Breast epithelium (tissue), 4 donors: ENCODE measurements at regions of chr2 and their contacts with region 1.

Region 1: DNA sequence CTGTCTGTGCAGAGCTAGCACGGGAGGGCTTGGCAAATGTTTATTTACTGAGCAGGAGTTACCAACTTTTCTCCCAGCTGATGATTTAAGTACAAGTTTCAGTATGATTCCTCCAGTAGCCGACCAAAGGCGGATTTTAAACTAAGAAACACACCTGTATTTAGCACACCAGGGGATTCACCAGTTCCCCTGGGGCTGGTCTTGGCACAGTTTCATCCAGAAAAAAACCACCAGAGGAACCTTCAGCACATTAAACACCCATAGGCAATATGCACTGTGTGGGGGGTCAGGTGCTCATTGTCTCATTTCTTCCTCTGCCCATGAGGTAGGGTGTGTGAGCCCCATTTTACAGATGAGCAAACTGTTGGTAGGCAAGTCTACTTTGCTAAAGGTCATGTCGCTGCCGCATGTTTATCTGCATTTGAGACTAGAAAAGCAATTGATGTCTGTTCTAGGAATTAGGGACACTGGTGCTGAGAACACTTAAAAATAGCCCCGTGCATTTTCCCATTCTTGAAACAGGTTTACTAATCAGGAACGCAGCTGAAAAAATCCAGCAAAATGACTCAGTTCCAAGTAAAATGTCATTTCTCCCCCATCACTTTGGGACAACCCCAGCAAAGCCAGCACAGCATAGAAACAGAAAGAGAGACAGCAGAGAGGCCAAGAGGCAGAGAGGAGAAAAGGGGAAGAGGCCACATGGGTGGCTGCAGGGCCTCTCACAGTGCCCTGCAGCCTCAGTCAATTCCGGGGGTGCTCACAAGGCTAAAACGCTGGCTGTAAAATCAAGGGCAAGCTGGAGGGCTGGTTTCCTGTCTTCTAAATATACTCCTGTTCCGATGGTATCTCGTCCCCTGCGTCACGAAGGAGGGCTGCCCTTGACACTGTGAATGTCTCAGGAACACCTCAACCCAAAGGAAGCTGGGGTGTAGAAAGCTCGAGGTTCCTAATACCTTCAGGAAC is 166.8 kb upstream of the ID2 start:
- DNase-seq: peak in 1 of 2 donors; percentile 44
- H3K4me3 ChIP-seq: no peak overlapping the region
- H3K27ac ChIP-seq: no peak overlapping the region
- H3K4me1 ChIP-seq: no peaks in the 10 kb centered on the region
- H3K27me3 ChIP-seq: no peaks in the 10 kb centered on the region
- CTCF ChIP-seq: no peak
- POLR2A ChIP-seq: no peak

Region 2: GRCh38 chr2:7392076-7392787 is 1122.8 kb before region 1 on chr2:
- intact Hi-C with region 1: loop called (anchors 5 kb)
- DNase-seq: no peak
- H3K4me3 ChIP-seq: peak overlapping the region in 1 of 3 donors; percentile 38
- H3K27ac ChIP-seq: no peak overlapping the region
- H3K4me1 ChIP-seq: no peaks in the 10 kb centered on the region
- H3K27me3 ChIP-seq: no peaks in the 10 kb centered on the region
- CTCF ChIP-seq: no peak
- POLR2A ChIP-seq: no peak

Region 3: GRCh38 chr2:8152392-8153257 is 362.5 kb before region 1 on chr2:
- intact Hi-C with region 1: no loop called
- DNase-seq: no peak
- H3K4me3 ChIP-seq: no peak overlapping the region
- H3K27ac ChIP-seq: no peak overlapping the region
- H3K4me1 ChIP-seq: no peaks in the 10 kb centered on the region
- H3K27me3 ChIP-seq: no peaks in the 10 kb centered on the region
- CTCF ChIP-seq: no peak
- POLR2A ChIP-seq: no peak

Region 4: GRCh38 chr2:8462899-8463648 is 52.0 kb before region 1 on chr2:
- intact Hi-C with region 1: no loop called
- DNase-seq: no peak
- H3K4me3 ChIP-seq: no peak overlapping the region
- H3K27ac ChIP-seq: no peak overlapping the region
- H3K4me1 ChIP-seq: no peaks in the 10 kb centered on the region
- H3K27me3 ChIP-seq: no peaks in the 10 kb centered on the region
- CTCF ChIP-seq: no peak
- POLR2A ChIP-seq: no peak